Activated CD4-positive, alpha-beta T cell treated with anti-CD3 and anti-CD28 coated beads for 36 hours (primary cell): ENCODE measurements at regions of chr1 and their contacts with region 1.

Region 1: DNA sequence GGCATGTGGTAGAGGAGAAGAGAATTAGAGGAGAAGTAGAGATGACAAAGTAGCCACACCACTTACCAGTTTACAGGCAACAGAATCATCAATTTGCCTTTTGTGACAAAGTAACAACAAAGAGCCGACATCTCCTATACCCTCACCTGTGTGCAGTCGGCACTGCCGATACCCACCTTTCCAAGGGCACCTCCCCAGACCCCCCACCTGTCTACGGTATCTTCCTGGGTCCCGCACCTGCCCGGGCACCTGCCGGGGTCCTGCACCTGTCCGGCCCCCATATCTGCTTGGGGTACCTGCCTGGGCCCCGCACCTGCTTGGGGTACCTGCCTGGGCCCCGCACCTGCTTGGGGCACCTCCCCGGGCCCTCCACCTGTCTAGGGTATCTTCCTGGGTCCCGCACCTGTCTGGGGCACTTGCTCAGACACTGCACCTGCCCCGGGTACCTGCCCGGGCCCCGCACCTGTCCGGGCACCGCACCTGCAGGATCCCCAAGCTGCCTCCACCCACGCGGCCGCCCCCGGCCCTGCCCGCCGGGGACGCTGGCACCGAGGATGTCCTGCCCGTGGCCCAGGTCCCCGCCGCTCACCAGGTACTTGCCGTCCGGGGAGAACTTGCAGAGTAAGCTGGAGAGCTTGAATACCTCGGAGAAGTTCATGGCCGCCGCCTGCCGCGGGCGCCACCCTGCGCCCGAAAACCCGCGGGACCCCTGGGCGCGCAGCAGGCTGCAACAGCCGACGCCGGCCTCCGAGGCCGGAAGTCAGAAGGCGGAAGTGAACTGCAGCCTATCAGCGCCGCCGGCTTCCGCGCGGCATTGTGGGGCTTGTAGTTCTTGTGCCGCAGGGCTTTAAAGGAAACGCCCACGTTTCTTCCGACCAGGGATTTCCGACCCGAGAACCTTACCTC is at the start of gene WRAP73:
- DNase-seq: peak; percentile 96
- ATAC-seq: peak; percentile 97
- H3K4me3 Mint-ChIP-seq: peak within 1 kb of the TSS; percentile 71
- H3K27ac Mint-ChIP-seq: no peak within 1 kb of the TSS
- H3K4me1 Mint-ChIP-seq: peaks cover 24% of the 10 kb centered on the region
- H3K27me3 Mint-ChIP-seq: peaks cover 17% of the 10 kb centered on the region
- total RNA-seq, gene WRAP73: 26.3 to 28.9 TPM

Region 2: DNA sequence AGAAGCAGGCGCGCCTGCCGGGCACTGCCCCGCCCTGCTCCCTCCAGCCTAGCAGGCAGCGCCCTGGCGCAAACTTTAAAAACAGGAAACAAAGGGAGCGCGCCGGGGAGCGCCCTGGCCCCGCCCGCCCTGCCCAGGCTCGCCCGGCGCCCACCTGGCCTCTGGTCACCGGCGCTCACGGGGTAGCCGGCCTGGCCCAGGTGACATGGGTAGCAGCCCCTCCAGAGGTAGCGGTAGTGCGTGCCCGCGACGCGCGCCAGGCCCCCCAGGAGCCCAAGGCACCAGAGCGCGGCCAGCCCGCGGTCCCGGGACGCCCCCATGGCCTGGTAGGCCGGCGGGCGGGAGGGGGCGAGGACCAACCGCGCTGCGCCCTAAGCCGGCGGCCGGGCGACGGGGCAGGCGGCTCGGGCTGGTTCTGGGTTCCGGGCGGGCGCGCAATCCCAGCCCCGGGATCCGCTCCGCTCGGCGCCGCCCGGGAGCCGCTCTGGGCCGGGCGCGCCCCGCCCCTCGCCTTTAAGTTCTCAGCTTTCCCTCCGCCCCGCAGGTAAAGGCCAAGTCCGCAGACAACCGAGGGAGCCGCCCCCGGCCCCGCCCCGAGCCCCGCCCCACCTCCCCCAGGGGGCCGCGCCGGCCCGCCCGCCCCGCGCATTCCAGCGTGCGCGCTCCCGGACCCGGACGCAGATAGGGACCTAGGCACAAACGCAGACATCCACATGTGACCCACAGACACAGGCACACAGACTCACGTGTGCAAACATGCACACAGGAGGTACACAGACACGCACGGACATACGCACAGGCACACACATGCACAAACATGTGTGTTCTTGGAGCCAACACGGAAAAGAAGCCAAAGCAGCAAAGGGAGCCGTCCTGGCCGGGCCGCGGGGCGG is 118.4 kb before region 1 on chr1:
- CTCF ChIA-PET with region 1: no interaction called
- POLR2A ChIA-PET with region 1: no interaction called
- intact Hi-C with region 1: loop called in 1 of 2 experiments (anchors 1 kb)
- DNase-seq: peak; percentile 88
- ATAC-seq: peak; percentile 87
- H3K4me3 Mint-ChIP-seq: peak overlapping the region; percentile 69
- H3K27ac Mint-ChIP-seq: peak overlapping the region; percentile 87
- H3K4me1 Mint-ChIP-seq: peaks cover 13% of the 10 kb centered on the region
- H3K27me3 Mint-ChIP-seq: no peaks in the 10 kb centered on the region

Region 3: DNA sequence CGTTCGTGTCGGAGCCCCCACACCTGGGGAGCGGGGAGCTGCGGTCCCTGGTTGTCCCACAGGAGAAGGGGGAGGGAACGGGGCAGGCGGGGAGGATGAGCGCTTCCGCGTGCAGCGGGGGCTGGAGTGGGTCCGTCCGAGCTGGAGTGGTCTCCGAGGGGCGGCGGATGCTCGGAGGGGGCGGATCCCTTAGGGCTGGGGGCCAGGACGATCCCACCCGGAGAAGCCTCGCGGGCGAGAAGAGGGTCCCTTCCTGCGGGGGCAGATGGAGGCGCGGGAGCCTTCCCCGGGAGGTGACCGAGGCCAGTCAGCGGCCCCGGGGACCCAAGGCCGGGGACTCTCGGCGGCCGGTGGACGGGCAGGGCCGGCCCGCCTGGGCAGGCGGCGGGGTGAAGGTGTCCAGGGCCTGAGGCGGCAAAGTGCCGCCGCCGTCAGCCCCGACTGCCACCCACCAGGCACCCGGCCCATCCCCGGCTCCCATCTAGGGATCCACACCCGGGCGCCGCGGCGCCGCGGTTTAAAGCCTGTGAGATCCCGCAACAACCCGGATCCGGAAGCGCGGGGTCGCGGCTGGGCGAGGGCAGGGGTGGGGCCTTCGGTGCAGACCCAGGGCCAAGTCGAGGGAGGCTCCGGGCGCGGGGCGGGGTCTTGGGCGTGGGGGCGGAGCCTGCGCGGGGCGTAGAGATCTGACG is 97.4 kb after region 1 on chr1:
- CTCF ChIA-PET with region 1: no interaction called
- POLR2A ChIA-PET with region 1: no interaction called
- intact Hi-C with region 1: loop called in 1 of 2 experiments (anchors 1 kb)
- DNase-seq: peak; percentile 95
- ATAC-seq: peak; percentile 99
- H3K4me3 Mint-ChIP-seq: peak overlapping the region; percentile 77
- H3K27ac Mint-ChIP-seq: peak overlapping the region; percentile 51
- H3K4me1 Mint-ChIP-seq: peaks cover 32% of the 10 kb centered on the region
- H3K27me3 Mint-ChIP-seq: no peaks in the 10 kb centered on the region

Region 4: GRCh38 chr1:3796215-3797061 is 146.8 kb after region 1 on chr1 and contains the start of gene LRRC47:
- CTCF ChIA-PET with region 1: no interaction called
- POLR2A ChIA-PET with region 1: no interaction called
- intact Hi-C with region 1: loop called in 1 of 2 experiments (anchors 1 kb)
- DNase-seq: peak; percentile 97
- ATAC-seq: peak; percentile 99
- H3K4me3 Mint-ChIP-seq: peak within 1 kb of the TSS; percentile 81
- H3K27ac Mint-ChIP-seq: peak within 1 kb of the TSS; percentile 87
- H3K4me1 Mint-ChIP-seq: peaks cover 44% of the 10 kb centered on the region
- H3K27me3 Mint-ChIP-seq: peaks cover 6% of the 10 kb centered on the region
- total RNA-seq, gene LRRC47: 34.8 to 38.7 TPM

Region 5: GRCh38 chr1:3900119-3900968 is 250.7 kb after region 1 on chr1 and contains the start of gene C1orf174:
- CTCF ChIA-PET with region 1: no interaction called
- POLR2A ChIA-PET with region 1: no interaction called
- intact Hi-C with region 1: loop called in 1 of 2 experiments (anchors 1 kb)
- DNase-seq: peak; percentile 94
- ATAC-seq: peak; percentile 76
- H3K4me3 Mint-ChIP-seq: peak within 1 kb of the TSS; percentile 87
- H3K27ac Mint-ChIP-seq: peak within 1 kb of the TSS; percentile 98
- H3K4me1 Mint-ChIP-seq: peaks cover 51% of the 10 kb centered on the region
- H3K27me3 Mint-ChIP-seq: no peaks in the 10 kb centered on the region
- total RNA-seq, gene C1orf174: 39.8 to 49.4 TPM

Region 6: DNA sequence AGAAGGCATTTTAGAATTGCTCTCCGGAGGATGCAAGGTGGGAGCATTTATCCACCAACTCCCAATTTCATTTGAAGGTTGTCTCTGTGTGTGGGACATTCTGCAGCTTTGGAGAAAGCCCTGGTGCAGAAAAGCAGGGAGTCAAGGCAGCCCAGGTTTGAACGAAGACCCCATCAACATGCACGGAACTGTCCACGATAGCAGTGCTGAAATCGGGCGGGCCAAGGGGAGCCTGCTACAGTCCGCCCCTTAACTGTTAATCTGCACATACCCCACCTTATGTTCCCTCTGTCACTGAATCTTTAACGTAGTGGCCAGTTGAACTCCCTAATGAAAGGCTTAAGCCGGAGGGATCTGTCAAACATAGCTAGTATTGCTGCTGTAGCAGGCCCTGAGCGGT is 319.3 kb after region 1 on chr1:
- CTCF ChIA-PET with region 1: no interaction called
- POLR2A ChIA-PET with region 1: no interaction called
- intact Hi-C with region 1: no loop called
- DNase-seq: no peak
- ATAC-seq: no peak
- H3K4me3 Mint-ChIP-seq: no peak overlapping the region
- H3K27ac Mint-ChIP-seq: no peak overlapping the region
- H3K4me1 Mint-ChIP-seq: no peaks in the 10 kb centered on the region
- H3K27me3 Mint-ChIP-seq: peaks cover 2% of the 10 kb centered on the region

Region 7: DNA sequence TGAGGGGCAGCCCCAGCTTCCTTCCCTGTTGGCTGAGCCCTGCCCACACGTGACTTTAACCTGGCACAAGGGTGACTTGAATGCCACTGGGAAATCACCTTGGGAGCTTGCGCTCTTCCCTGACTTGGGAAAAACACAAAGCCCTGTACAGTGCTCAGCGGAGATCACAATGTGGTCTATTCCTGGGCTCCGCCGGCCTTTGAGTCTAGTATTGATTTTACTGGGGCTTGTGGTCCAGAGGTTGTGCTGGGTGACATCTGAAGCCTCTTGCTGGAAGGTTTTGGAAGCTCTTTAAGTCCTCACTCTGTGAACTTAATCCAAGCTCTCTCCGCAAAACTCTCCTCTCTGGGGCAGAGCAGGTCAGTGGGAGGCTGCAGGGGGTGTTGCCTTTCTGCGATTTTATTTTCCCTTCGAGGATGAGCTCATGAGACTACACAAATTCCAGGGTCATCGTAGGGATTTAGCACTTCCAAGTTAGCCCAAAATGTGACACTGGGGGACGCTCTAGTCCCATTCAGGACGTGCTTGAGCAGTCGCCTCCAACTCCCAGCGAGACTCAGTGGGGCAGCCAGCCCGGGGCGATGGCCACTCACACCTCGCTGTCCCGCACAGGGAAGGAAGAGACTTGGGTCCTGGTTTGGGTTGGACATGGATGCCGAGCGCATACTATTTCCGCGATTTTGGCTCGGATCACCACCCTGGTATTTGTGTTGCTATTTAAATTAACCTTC is 712.9 kb after region 1 on chr1:
- CTCF ChIA-PET with region 1: no interaction called
- POLR2A ChIA-PET with region 1: no interaction called
- intact Hi-C with region 1: no loop called
- DNase-seq: no peak
- ATAC-seq: no peak
- H3K4me3 Mint-ChIP-seq: no peak overlapping the region
- H3K27ac Mint-ChIP-seq: no peak overlapping the region
- H3K4me1 Mint-ChIP-seq: no peaks in the 10 kb centered on the region
- H3K27me3 Mint-ChIP-seq: no peaks in the 10 kb centered on the region